Naive thymus-derived CD4-positive, alpha-beta T cell (primary cell): ENCODE measurements at regions of chr6 and their contacts with region 1.

Region 1: GRCh38 chr6:144055121-144055931 is 40.0 kb downstream of the SF3B5 start:
- DNase-seq: peak in 7 of 9 donors; percentile 49 to 76 (median 66)
- ATAC-seq: peak; percentile 96
- H3K4me3 ChIP-seq: peak overlapping the region; percentile 52
- H3K4me3 Mint-ChIP-seq: peak overlapping the region; percentile 74 to 93 (median 87)
- H3K27ac ChIP-seq: peak overlapping the region; percentile 66
- H3K27ac Mint-ChIP-seq: peak overlapping the region; percentile 78 to 99 (median 93)
- H3K4me1 ChIP-seq: peaks cover 12 to 23% of the 10 kb centered on the region in 2 donors
- H3K4me1 Mint-ChIP-seq: peaks cover 24 to 42% (median 31%) of the 10 kb centered on the region in 7 donors
- H3K27me3 ChIP-seq: no peaks in the 10 kb centered on the region
- H3K27me3 Mint-ChIP-seq: no peaks in the 10 kb centered on the region

Region 2: DNA sequence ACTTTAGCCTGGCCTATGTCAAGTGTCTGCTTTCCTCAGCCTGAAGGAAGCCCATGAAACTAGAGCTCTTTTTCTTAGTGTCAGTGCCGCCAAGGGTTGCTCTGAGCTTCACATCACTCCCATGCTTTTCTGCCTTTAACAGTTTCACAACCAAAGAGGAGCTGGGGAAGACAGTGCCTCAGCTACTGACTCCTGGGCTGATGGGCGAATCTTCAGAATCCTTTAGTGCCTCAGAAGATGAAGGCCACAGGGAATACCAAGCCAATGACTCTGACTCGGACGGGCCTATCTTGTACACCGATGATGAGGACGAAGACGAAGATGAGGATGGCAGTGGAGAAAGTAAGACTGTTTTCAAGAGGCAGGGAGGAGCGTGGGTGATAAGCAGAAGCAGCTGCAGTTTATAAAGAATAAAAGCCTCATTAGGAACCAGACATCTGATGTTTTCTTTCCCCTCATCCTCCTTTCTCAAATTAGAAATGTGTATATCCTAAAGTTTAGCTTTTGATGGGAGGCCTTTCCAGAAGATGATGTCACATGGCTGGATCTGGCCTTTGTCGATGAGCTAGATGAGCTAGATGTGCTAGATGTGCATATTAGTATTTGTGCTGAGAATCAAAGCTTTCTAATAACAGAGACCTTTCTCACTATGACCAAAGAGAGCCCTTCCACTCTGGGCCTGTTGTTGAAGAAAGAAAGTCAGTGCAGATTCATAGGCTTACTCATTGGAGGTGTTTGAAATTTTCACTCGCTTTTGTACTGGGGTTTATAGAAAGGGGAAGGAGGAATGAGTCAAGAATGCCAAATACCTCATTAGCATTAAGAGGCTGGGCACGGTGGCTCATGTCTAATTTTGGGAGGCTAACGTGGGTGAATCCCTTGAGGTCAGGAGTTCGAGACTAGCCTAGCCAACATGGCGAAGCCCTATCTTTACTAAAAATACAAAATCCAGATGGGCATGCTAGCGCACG is 282.9 kb before region 1 on chr6:
- CTCF ChIA-PET with region 1: no interaction called
- POLR2A ChIA-PET with region 1: no interaction called
- intact Hi-C with region 1: no loop called
- DNase-seq: no peak
- ATAC-seq: no peak
- H3K4me3 ChIP-seq: no peak overlapping the region
- H3K4me3 Mint-ChIP-seq: no peak overlapping the region
- H3K27ac ChIP-seq: no peak overlapping the region
- H3K27ac Mint-ChIP-seq: no peak overlapping the region
- H3K4me1 ChIP-seq: no peaks in the 10 kb centered on the region
- H3K4me1 Mint-ChIP-seq: no peaks in the 10 kb centered on the region
- H3K27me3 ChIP-seq: no peaks in the 10 kb centered on the region
- H3K27me3 Mint-ChIP-seq: no peaks in the 10 kb centered on the region

Region 3: GRCh38 chr6:144036064-144036834 is 19.1 kb before region 1 on chr6:
- CTCF ChIA-PET with region 1: interaction called, 3 read pairs
- POLR2A ChIA-PET with region 1: no interaction called
- intact Hi-C with region 1: loop called in 1 of 2 experiments (anchors 1 kb)
- DNase-seq: peak in 2 of 9 donors; percentile 14 to 39
- ATAC-seq: peak; percentile 73
- H3K4me3 ChIP-seq: no peak overlapping the region
- H3K4me3 Mint-ChIP-seq: peak overlapping the region; percentile 28 to 75 (median 53)
- H3K27ac ChIP-seq: no peak overlapping the region
- H3K27ac Mint-ChIP-seq: peak overlapping the region in 5 of 9 donors; percentile 15 to 39 (median 22)
- H3K4me1 ChIP-seq: peaks cover 0 to 10% of the 10 kb centered on the region in 2 donors
- H3K4me1 Mint-ChIP-seq: peaks cover 0 to 17% (median 13%) of the 10 kb centered on the region in 7 donors
- H3K27me3 ChIP-seq: no peaks in the 10 kb centered on the region
- H3K27me3 Mint-ChIP-seq: peaks cover 0 to 2% (median 0%) of the 10 kb centered on the region in 5 donors

Region 4: DNA sequence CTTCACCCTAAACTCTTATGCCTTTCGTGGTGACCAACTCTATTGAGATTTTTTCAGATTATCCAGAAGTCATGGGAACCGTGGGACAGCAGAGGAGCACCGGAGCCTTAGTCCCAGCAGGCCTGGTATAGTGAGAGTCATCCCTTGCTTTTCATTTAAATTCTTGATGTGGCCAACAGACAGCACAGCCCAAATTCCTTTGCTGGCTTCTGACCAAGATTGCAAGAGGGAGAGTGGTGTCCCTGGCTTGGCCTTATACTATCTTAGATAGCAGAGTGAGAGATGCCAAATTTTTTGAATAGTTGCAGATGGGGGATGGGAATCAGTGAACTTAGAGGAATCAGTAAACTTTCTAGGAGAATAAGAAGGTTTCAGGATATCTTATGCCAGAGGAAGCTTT is 102.8 kb after region 1 on chr6:
- CTCF ChIA-PET with region 1: no interaction called
- POLR2A ChIA-PET with region 1: no interaction called
- intact Hi-C with region 1: no loop called
- DNase-seq: no peak
- ATAC-seq: no peak
- H3K4me3 ChIP-seq: no peak overlapping the region
- H3K4me3 Mint-ChIP-seq: no peak overlapping the region
- H3K27ac ChIP-seq: no peak overlapping the region
- H3K27ac Mint-ChIP-seq: peak overlapping the region in 1 of 9 donors; percentile 20
- H3K4me1 ChIP-seq: peaks cover 0 to 8% of the 10 kb centered on the region in 2 donors
- H3K4me1 Mint-ChIP-seq: peaks cover 0 to 40% (median 0%) of the 10 kb centered on the region in 7 donors
- H3K27me3 ChIP-seq: no peaks in the 10 kb centered on the region
- H3K27me3 Mint-ChIP-seq: no peaks in the 10 kb centered on the region

Region 5: DNA sequence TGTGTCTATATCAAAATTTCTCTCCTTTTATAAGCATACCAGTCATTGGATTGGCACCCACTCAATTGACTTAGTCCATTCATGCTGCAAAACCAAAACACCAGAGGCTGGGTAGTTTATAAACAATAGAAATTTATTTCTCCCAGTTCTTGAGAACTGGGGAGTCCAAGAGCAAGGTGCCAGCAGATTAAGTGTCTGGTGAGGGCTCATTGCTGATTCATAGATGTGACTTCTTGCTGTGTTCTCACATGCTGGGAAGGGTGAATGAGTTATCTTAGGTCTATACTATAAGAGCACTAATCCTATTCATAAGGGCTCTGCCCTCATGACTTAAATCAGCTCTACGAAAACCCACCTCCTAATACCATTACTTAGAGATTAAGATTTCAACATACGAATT is 1178.6 kb after region 1 on chr6:
- CTCF ChIA-PET with region 1: no interaction called
- POLR2A ChIA-PET with region 1: no interaction called
- intact Hi-C with region 1: no loop called
- DNase-seq: no peak
- ATAC-seq: no peak
- H3K4me3 ChIP-seq: no peak overlapping the region
- H3K4me3 Mint-ChIP-seq: no peak overlapping the region
- H3K27ac ChIP-seq: no peak overlapping the region
- H3K27ac Mint-ChIP-seq: no peak overlapping the region
- H3K4me1 ChIP-seq: no peaks in the 10 kb centered on the region
- H3K4me1 Mint-ChIP-seq: no peaks in the 10 kb centered on the region
- H3K27me3 ChIP-seq: no peaks in the 10 kb centered on the region
- H3K27me3 Mint-ChIP-seq: peaks cover 1 to 41% (median 30%) of the 10 kb centered on the region in 5 donors